ENCODE measurements at regions of chr1 and their contacts with region 1.

Region 1: GRCh38 chr1:34763142-34763781 is 3.7 kb downstream of the GJB4 start:
- DNase-seq: peak; percentile 91
- H3K4me3 ChIP-seq: peak overlapping the region in 1 of 3 experiments; percentile 2
- H3K27ac ChIP-seq: peak overlapping the region; percentile 81
- H3K4me1 ChIP-seq: peaks cover 53% of the 10 kb centered on the region
- H3K27me3 ChIP-seq: no peaks in the 10 kb centered on the region
- CTCF ChIP-seq: no peak

Region 2: DNA sequence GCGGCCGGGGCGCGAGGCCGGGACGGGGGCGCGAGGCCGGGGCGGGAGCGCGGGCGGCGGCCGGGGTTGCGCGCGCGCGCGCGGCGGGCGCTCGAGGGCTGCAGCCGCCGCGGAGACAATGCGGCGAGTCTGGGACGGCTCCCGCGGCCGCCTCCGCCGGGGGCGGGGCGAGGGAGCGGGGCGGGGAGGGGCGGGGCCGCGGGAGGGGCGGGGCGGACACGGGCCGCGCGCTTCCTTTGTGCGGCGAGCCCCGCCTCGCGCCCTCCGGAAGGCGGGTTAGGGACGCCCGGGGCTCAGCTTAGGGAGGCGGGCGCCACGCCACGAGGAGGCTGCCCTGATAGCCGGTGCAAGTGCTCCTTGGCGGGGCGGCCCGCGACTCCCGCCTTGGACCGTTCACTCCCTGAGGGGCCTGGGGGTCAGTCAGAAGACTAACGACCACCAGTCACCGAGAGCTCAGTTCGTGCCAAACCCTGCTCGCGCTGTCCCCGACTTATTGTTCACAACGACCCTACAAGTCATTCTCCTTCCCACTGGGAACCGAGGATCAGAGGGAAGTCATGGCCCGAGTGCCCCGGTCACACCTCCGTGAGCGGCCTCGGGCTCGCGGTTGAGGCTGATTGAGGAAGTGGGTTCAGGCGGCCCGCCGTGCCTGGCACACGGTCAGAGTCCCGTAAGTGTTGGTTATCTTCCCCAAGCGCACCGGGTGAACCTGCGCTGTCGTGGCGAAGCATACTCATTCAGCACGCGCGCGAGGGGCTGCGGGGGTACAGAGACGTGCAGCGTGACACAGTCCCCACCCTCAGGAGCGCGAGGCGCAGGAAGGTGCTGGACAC is 1413.3 kb before region 1 on chr1:
- CTCF ChIA-PET with region 1: no interaction called
- dilution Hi-C with region 1: no loop called
- in situ Hi-C with region 1: no loop called
- intact Hi-C with region 1: loop called (anchors 10 kb)
- DNase-seq: peak; percentile 72
- H3K4me3 ChIP-seq: peak overlapping the region; percentile 45 to 82 (median 73)
- H3K27ac ChIP-seq: peak overlapping the region; percentile 41
- H3K4me1 ChIP-seq: peaks cover 38% of the 10 kb centered on the region
- H3K27me3 ChIP-seq: no peaks in the 10 kb centered on the region
- CTCF ChIP-seq: no peak

Region 3: GRCh38 chr1:34781071-34781843 is 18.0 kb after region 1 on chr1 and contains the start of gene GJB3:
- CTCF ChIA-PET with region 1: no interaction called
- dilution Hi-C with region 1: no loop called
- in situ Hi-C with region 1: no loop called
- intact Hi-C with region 1: loop called (anchors 1 kb)
- DNase-seq: peak; percentile 66
- H3K4me3 ChIP-seq: peak within 1 kb of the TSS; percentile 82 to 89 (median 84)
- H3K27ac ChIP-seq: peak within 1 kb of the TSS; percentile 80
- H3K4me1 ChIP-seq: peaks cover 59% of the 10 kb centered on the region
- H3K27me3 ChIP-seq: no peaks in the 10 kb centered on the region
- CTCF ChIP-seq: no peak
- total RNA-seq, gene GJB3: 24.8 to 188 TPM

Measured in mammary epithelial cell (primary cell).